Mammary epithelial cell (primary cell): ENCODE measurements at regions of chr3 and their contacts with region 1.

Region 1: GRCh38 chr3:129128357-129129155 is 7.0 kb upstream of the RAB43 start:
- DNase-seq: no peak
- H3K4me3 ChIP-seq: no peak overlapping the region
- H3K27ac ChIP-seq: no peak overlapping the region
- H3K4me1 ChIP-seq: peaks cover 4% of the 10 kb centered on the region
- H3K27me3 ChIP-seq: no peaks in the 10 kb centered on the region
- CTCF ChIP-seq: no peak

Region 2: DNA sequence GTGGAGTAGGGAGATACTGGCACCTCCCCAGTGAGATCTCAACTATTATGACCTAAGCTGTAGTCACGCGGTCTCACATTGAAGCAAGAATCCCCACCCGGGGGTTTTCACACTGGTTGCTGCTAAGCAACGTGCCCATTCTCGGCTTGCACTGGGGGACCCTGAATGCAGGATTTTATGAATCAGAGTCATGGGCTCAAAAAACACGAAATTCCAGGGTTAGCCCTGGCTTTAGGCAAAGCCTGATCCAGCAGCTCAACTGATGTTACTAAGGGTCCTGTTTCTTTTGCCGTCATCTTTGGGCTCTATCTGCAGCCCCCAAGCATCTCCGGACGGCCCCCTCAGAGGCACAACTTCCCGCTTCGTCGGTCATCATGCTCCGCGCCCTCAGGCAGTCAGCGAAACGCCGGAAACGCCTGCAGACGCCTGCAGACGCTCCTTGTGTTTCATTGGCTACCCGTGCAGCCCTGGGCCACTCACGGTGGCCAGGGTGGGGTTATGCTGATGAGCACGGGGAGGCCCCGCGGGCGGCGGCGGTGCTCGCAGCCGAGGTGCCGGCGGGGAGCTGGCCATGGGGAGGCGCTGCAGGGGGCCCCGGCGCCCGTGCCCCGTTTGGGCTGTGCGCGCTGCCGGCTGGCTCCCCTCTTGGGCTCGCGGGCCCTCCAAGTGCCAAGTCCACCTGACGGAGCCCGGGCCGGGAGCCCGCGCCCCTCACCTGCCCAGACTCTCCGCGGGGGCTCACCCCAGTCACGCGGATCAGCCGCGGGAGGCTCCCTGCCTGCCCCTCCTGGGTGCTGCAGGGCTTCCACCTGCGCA is 101.6 kb before region 1 on chr3:
- CTCF ChIA-PET with region 1: no interaction called
- dilution Hi-C with region 1: loop called (anchors 5 kb)
- in situ Hi-C with region 1: no loop called
- intact Hi-C with region 1: no loop called
- DNase-seq: peak; percentile 86
- H3K4me3 ChIP-seq: peak overlapping the region; percentile 35 to 40 (median 39)
- H3K27ac ChIP-seq: no peak overlapping the region
- H3K4me1 ChIP-seq: peaks cover 8% of the 10 kb centered on the region
- H3K27me3 ChIP-seq: no peaks in the 10 kb centered on the region
- CTCF ChIP-seq: peak; percentile 12 to 37